Cardiac septum (tissue), 1 donor: ENCODE measurements at regions of chr1 and their contacts with region 1.

Region 1: GRCh38 chr1:167687919-167688519 is 33.8 kb upstream of the MPZL1 start:
- DNase-seq: no peak

Region 2: DNA sequence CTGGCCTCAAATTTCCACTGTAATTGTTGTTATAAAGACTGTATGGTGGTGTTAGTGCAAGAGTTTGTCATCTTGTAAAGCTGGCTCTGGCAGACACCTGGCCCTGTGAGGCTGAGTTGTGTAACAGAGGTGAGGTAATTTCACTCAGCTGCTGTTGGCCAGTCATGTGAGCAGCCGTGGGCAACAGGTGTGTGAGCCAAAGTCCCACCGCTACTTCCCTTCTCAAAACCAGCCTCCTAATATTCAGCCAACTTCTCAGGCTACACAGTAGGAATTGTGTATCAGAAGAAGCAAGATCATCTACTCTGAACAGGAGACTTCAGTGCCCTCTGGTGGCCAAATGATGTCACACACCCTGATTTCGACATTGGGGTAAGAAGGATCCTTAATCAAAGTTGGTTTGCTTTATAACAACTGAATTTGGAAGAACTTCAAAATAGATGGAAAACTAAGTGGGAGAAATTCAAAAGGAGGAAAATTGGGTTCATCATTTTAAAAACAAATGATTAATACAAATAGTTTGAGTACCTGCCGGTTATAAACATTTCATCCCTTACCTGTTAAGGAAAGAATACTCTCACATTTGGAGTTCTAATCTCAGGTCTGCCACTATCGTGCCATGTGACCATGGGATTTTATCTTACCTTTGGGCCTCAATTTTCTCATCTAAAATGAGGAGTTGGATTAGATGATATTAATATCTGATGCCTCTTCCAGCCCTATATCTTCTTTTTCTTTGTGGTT is 131.9 kb before region 1 on chr1:
- intact Hi-C with region 1: loop called (anchors 5 kb)
- DNase-seq: peak; percentile 77

Region 3: DNA sequence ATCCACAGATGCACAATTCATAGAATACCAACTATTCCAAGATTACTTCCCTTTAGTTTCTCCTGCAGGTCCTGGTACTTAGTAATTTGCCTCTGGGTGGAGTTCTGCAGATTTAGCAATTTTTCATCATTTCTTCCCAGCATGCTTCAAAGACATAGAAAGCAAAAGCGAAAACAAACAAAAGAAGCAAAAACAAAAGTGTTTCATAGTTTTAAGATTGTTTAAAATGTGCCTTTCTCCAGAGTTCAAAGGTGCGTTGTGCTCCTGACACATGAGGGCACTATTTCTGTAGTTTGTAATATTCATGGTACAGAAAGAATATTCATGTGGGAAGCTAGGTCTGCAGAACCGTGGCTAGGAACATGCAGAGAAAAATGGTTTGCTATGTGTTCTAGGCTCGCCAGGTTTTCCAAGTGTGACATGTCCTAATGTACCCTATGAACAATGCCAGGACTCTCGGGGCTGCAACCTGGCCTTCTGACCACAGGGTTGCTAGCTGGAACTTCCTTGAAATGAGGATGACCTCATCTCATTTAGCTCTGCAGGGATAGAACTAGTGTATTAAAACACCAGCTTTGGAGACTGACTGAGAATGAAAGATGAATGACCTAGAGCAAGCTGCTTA is 88.0 kb before region 1 on chr1:
- intact Hi-C with region 1: loop called (anchors 1 kb)
- DNase-seq: no peak

Region 4: GRCh38 chr1:167629681-167630567 is 58.1 kb before region 1 on chr1 and contains the start of gene RCSD1:
- intact Hi-C with region 1: loop called (anchors 2 kb)
- DNase-seq: peak; percentile 90
- total RNA-seq, gene RCSD1: 32.7 TPM

Region 5: DNA sequence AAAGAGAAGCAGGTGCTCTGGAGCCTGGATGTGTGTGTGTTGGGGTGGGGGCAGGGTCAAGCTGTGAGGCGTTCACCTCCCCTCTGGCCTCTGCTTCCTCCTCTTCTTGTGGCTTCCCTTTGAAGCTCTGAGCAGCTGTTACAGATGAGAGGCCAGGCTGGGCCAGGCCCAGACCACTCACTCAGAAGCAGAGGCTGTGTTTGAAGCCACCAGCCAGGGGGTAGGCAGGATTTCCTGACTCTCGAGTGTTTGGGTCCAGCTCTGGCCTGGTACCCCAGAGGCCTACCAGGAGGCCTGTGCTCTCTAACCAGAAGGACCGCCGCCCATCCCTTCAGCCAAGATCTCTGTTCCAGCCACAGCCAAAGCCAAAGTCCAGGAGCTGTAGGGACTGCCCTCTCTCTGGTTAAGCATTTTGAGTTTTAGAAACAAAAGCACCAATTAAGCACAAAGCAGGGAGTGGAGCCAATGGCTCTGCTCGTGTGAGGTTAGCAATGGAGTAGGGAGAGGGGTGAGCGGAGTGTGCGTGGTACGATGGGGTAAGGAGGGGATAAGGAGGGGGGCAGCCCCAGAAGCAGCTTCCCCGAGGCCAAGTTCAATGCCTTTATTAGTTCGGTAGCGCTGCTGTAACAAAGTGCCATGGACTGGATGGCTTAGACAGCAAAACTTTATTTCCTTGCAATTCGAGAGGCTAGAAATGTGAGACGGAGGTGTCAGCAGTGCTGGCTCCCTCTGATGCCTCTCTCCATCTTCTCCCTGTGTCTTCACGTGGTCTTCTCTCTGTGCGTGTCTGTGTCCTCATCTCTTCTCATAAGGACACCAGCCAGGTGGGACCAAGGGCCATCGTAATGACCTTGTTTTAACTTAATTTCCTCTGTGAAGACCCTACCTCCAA is 37.5 kb before region 1 on chr1:
- intact Hi-C with region 1: loop called (anchors 5 kb)
- DNase-seq: peak; percentile 77

Region 6: DNA sequence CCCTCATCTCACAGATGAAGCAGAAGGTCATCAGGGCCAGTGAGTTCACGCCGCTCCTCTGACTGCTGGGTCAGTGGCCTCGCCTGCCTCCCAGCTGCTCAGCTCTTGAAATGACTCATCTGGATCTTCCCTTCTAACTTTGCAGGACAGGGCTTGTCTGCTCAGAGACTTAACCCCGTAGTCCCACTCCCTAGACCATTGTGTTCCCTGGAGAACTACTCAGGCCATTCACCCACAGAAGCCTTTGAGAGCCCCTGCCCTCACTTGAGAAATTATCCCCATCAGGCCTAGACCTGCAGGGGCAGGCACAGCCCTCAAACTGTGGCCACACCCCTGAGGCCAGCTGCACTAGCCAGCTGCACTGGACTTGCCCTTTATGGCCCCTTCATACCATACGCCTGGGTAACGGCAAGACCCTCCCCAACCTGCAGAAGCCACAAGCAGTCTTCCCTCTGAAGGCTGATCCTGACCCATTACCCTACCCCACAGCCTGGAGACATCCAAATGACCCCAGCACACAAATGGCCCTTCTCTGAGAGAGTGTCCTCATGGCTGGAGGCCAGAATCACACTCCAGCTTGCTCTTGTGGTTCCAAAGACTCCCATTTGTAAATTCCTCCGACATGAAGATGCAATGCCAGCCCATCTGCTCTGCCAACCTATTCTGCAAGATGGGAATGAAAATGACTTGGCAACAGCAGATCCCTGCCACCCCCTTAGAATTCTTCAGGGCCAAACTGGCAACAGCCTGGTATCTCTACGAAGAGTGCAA is 24.8 kb before region 1 on chr1:
- intact Hi-C with region 1: loop called (anchors 2 kb)
- DNase-seq: peak; percentile 55

Region 7: GRCh38 chr1:168421399-168422004 is 733.5 kb after region 1 on chr1:
- intact Hi-C with region 1: no loop called
- DNase-seq: no peak